ENCODE measurements at regions of chr15 and their contacts with region 1.

Region 1: DNA sequence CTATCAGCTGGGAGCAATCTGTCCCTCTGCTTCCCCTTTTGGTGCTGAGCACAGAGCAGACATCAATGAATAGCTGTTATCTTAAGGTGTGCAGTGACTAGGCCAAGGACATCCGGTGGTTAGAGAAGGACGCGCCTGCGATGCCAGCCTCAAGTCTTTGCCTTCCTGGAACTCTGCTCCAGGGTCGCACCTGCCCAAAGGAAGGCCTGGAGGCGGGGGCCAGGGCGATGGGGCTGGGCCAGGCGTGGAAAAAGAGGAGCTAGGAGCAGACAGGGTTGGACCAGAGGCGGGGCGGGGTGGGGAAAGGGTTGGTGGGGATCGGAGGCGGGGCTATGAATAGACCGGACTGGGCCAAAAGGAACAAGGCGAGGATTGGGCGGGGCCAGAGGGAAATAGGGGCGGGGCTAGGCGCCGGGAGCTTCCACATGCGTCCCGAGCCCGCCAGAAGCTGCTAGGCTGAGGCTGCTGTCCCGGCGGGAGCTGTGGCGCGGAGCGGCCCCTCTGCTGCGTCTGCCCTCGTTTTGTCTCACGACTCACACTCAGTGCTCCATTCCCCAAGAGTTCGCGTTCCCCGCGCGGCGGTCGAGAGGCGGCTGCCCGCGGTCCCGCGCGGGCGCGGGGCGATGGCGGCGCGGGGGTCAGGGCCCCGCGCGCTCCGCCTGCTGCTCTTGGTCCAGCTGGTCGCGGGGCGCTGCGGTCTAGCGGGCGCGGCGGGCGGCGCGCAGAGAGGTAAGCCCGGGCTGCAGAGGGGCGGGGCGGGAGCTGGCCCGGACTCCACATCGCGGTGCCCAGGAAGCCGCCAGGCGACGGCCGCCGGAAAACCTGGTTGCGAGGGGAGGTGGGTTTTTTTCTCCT is at the start of gene CHRNA5:
- DNase-seq: peak; percentile 88
- ATAC-seq: peak; percentile 91
- H3K4me3 Mint-ChIP-seq: peak within 1 kb of the TSS; percentile 77
- H3K27ac Mint-ChIP-seq: peak within 1 kb of the TSS; percentile 24
- H3K4me1 Mint-ChIP-seq: peaks cover 26% of the 10 kb centered on the region
- H3K27me3 Mint-ChIP-seq: peaks cover 15% of the 10 kb centered on the region
- total RNA-seq, gene CHRNA5: 6.5 to 8.5 TPM

Region 2: GRCh38 chr15:78492872-78493271 is 72.5 kb before region 1 on chr15:
- CTCF ChIA-PET with region 1: no interaction called
- POLR2A ChIA-PET with region 1: no interaction called
- intact Hi-C with region 1: loop called in 1 of 2 experiments (anchors 2 kb)
- DNase-seq: no peak
- ATAC-seq: no peak
- H3K4me3 Mint-ChIP-seq: no peak overlapping the region
- H3K27ac Mint-ChIP-seq: peak overlapping the region; percentile 51
- H3K4me1 Mint-ChIP-seq: peaks cover 6% of the 10 kb centered on the region
- H3K27me3 Mint-ChIP-seq: no peaks in the 10 kb centered on the region

Region 3: GRCh38 chr15:78506971-78507830 is 58.1 kb before region 1 on chr15 and contains the start of gene HYKK:
- CTCF ChIA-PET with region 1: no interaction called
- POLR2A ChIA-PET with region 1: interaction called, 4 read pairs
- intact Hi-C with region 1: loop called in 1 of 2 experiments (anchors 1 kb)
- DNase-seq: peak; percentile 87
- ATAC-seq: peak; percentile 91
- H3K4me3 Mint-ChIP-seq: peak within 1 kb of the TSS; percentile 77
- H3K27ac Mint-ChIP-seq: peak within 1 kb of the TSS; percentile 58
- H3K4me1 Mint-ChIP-seq: peaks cover 22% of the 10 kb centered on the region
- H3K27me3 Mint-ChIP-seq: no peaks in the 10 kb centered on the region
- total RNA-seq, gene HYKK: 2.5 to 4.2 TPM

Region 4: DNA sequence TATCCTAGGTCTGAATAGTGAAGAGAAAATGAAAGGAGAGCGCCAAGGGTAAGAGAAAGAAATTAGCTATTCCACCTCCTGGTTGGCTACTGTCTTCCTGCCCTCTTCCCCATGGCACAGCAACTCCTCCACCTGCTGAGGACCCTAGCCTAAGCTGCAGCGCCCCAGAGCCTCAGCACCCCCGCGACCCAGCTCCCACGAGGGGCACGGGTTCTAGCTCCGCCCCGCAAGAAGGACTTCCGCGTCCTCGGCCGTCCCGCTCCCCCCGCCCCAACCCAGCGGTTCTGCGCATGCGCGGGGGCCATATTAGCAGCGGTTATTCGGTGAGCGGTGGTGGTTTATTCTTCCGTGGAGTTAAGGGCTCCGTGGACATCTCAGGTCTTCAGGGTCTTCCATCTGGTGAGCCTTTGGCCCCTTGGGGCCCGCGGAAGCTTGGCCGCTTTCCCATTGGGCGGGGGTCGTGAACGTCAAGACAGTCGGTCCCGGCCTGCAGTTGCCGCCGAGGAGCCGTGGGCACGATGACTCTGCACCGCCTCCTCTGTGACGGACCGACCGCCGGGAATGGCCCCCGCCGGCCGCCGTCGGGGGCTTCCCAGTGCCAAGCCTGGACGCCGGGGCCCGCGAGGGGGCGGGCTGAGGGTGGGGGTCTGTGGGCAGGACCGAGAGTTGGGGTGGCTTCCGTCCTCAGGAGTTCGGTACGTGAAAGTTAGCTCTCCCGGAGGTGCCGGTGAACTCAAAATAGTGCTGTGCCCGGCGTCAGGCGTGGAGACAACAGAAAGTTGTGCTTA is 25.0 kb before region 1 on chr15 and contains the start of gene PSMA4:
- CTCF ChIA-PET with region 1: interaction called, 15 read pairs
- POLR2A ChIA-PET with region 1: interaction called, 7 read pairs
- intact Hi-C with region 1: loop called in 1 of 2 experiments (anchors 1 kb)
- DNase-seq: peak; percentile 96
- ATAC-seq: peak; percentile 86
- H3K4me3 Mint-ChIP-seq: peak within 1 kb of the TSS; percentile 91
- H3K27ac Mint-ChIP-seq: peak within 1 kb of the TSS; percentile 98
- H3K4me1 Mint-ChIP-seq: peaks cover 27% of the 10 kb centered on the region
- H3K27me3 Mint-ChIP-seq: no peaks in the 10 kb centered on the region
- total RNA-seq, gene PSMA4: 273 to 312 TPM

Region 5: DNA sequence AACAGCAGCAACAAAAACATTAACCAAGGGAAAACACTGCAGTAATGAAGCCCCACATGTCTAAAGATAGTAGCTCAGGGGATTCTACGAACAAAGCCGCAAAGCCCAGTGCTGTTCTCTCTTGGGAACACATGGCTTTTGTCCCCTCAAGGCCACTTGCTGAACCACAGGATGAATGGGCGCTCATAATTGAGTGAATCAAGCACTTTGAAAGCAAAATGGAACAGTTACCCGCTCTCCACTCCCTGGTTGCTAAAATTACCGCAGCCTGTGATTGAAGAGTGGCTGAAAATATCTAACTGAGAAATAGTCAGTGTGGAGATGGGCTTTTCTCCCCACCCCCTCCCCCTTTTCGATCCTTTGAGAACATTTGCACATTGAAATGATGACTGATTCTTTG is 485.7 kb after region 1 on chr15:
- CTCF ChIA-PET with region 1: no interaction called
- POLR2A ChIA-PET with region 1: no interaction called
- intact Hi-C with region 1: no loop called
- DNase-seq: no peak
- ATAC-seq: no peak
- H3K4me3 Mint-ChIP-seq: no peak overlapping the region
- H3K27ac Mint-ChIP-seq: no peak overlapping the region
- H3K4me1 Mint-ChIP-seq: no peaks in the 10 kb centered on the region
- H3K27me3 Mint-ChIP-seq: no peaks in the 10 kb centered on the region